ENCODE measurements at regions of chr12 and their contacts with region 1.

Region 1: DNA sequence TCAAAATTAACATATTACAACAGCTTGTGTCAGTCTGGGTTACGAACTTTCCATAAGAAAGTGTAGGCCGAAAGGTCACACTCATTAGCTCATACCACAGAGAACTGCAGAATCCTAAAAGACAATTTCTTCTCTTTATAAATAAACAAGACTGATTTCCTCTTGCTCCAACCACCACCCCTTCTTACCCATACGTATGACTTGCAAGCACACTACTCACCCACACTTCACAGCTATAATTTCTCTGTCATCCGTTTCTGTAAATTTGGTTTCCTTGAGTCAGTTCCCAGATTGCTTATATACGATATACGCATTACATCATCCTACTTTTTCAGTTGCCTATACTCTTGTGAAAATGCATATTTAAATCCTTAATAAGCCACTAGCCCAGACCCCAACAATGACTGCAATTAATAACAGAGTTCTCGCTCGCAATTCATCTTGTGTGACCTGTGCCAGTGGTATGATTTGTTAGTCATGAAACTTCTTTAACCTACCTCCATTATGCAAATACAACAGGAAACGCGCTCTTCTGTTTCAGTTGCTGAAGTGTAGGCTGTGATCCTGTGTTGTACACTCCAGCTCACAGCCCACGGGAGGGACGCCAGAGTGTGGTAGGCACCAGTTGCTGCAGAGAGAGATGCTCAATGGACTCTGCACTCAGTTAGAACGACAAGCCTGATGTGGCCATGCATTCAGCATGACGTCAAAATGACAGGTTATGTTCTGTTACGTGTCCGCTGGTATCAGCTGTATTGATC is 417.6 kb downstream of the PDZRN4 start:
- DNase-seq: no peak
- H3K4me3 ChIP-seq: no peak overlapping the region
- CTCF ChIP-seq: no peak
- POLR2A ChIP-seq: no peak

Region 2: GRCh38 chr12:41407232-41407799 is 198.4 kb before region 1 on chr12:
- intact Hi-C with region 1: no loop called
- DNase-seq: no peak
- H3K4me3 ChIP-seq: no peak overlapping the region
- CTCF ChIP-seq: no peak
- POLR2A ChIP-seq: no peak

Region 3: DNA sequence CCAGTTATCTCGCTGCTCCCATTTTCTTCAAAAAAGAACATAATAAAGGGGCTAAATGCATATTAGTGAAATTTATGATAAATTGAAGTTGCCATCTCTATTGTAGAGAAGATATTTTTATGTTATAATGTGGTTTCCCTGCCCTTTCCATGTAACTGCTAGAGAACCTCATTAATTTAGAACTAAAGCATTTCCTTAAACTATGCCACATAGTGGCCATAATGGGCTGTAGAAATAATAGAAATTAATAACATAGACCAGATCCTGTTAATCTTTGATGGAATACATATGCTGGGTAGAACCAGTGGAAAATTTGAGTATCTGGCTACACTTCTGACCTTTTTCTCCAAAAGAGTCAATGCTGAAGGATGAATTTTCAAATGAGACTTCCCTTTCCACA is 40.9 kb before region 1 on chr12:
- intact Hi-C with region 1: loop called (anchors 1 kb)
- DNase-seq: no peak
- H3K4me3 ChIP-seq: no peak overlapping the region
- CTCF ChIP-seq: no peak
- POLR2A ChIP-seq: no peak

Measured in lower leg skin (tissue), 4 donors.